GM12878 (cell line): ENCODE measurements at regions of chr6 and their contacts with region 1.

Region 1: DNA sequence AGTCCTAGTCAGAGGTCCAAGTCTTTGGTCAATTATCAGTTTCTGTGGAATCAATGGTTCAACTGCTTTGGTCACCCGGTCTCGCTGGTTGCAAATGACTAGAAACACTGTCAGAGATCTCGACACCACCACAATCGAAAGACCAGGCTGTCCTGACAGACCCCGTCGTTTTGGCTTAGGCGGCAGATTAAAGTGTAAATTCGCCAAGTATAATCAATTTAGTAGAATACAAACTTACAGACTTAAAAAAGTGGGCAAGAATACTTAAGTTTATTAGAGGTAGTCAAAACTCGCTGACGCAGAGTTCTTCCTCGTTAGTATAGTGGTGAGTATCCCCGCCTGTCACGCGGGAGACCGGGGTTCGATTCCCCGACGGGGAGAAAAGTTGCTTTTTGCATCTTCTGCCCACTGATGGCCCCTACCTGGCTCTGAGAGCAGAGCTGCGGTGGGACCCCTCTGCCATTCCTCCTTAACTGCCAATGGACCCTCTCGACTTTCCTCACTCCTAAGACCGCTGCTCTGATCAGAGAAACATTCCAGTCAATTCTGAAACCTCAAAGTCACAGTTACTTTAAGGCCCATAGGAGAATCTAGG is 30.6 kb upstream of the ZNF184 start:
- DNase-seq: peak; percentile 73
- ATAC-seq: peak; percentile 70
- H3K4me3 ChIP-seq: peak overlapping the region; percentile 78
- H3K27ac ChIP-seq: peak overlapping the region; percentile 58
- H3K4me1 ChIP-seq: no peaks in the 10 kb centered on the region
- H3K27me3 ChIP-seq: no peaks in the 10 kb centered on the region; a peak in 1 of 4 replicates
- CTCF ChIP-seq: no peak
- EP300 ChIP-seq: no peak
- POLR2A ChIP-seq: no peak
- RAD21 ChIP-seq: no peak

Region 2: GRCh38 chr6:27312146-27312949 is 191.2 kb before region 1 on chr6 and contains the start of gene POM121L2:
- CTCF ChIA-PET with region 1: interaction called, 3 read pairs
- POLR2A ChIA-PET with region 1: no interaction called
- RAD21 ChIA-PET with region 1: no interaction called
- SMC1A ChIA-PET with region 1: no interaction called
- in situ Hi-C with region 1: no loop called
- intact Hi-C with region 1: loop called (anchors 5 kb)
- DNase-seq: no peak
- ATAC-seq: peak; percentile 89
- H3K4me3 ChIP-seq: peak within 1 kb of the TSS; percentile 82
- H3K27ac ChIP-seq: no peak within 1 kb of the TSS
- H3K4me1 ChIP-seq: 0 out of 2 replicates have a peak, but pooled peaks cover 5% of the 10 kb centered on the region
- H3K27me3 ChIP-seq: no peaks in the 10 kb centered on the region; a peak in 2 of 4 replicates
- CTCF ChIP-seq: peak; percentile 74 to 85 (median 77)
- EP300 ChIP-seq: no peak
- POLR2A ChIP-seq: peak; percentile 45
- RAD21 ChIP-seq: peak; percentile 81
- polyA plus RNA-seq, gene POM121L2: not detected

Region 3: DNA sequence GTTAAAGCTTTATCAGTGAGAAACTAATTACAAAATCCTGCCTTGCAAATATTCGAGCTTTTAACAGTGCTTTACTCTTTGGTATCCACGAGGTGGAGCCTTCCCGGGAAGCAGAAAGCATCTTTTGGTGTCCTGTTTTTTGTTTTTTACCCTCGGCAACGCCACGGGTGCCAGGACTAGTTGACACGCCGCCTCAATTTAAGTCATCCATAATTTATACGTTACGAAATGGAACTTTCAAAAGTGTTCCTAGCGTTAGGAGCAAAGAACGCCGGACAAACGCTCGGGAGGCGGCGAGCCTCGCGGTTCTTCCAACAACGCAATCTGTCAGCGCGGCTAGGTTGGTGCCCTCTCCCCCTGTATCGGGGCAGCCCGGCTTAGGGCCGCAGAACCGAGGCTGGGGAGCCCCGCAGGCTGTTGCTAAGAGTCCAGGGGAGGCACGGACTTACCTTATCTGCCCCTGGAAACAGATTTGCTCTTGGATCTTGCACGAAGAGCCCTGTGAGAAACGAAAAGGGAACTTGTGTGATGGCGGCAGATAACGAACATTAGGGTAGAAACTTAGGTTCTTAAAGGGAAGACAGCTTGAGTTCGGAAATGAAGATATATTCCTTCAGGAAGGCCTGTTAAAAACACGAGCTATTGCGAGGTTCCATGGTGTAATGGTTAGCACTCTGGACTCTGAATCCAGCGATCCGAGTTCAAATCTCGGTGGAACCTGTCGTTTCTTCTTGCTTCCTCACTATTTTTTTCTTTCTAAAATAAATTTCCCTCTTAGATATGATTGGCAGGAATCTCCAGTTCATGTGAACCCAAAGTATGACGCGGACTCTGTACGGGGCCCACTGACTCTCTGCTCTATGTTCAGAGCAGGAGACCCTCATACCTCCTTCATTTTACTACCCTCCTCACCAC is 15.6 kb after region 1 on chr6:
- CTCF ChIA-PET with region 1: interaction called, 14 read pairs
- POLR2A ChIA-PET with region 1: no interaction called
- RAD21 ChIA-PET with region 1: interaction called, 10 read pairs
- SMC1A ChIA-PET with region 1: interaction called, 22 read pairs
- in situ Hi-C with region 1: no loop called
- intact Hi-C with region 1: no loop called
- DNase-seq: peak; percentile 83
- ATAC-seq: peak; percentile 92
- H3K4me3 ChIP-seq: peak overlapping the region; percentile 83
- H3K27ac ChIP-seq: peak overlapping the region; percentile 67
- H3K4me1 ChIP-seq: no peaks in the 10 kb centered on the region
- H3K27me3 ChIP-seq: 0 out of 4 replicates have a peak, but pooled peaks cover 0 to 5% of the 10 kb centered on the region in 2 experiments
- CTCF ChIP-seq: peak; percentile 61 to 72 (median 69)
- EP300 ChIP-seq: peak in 1 of 2 experiments; percentile 15; a peak in 1 of 4 replicates
- POLR2A ChIP-seq: no peak
- RAD21 ChIP-seq: peak; percentile 68

Region 4: DNA sequence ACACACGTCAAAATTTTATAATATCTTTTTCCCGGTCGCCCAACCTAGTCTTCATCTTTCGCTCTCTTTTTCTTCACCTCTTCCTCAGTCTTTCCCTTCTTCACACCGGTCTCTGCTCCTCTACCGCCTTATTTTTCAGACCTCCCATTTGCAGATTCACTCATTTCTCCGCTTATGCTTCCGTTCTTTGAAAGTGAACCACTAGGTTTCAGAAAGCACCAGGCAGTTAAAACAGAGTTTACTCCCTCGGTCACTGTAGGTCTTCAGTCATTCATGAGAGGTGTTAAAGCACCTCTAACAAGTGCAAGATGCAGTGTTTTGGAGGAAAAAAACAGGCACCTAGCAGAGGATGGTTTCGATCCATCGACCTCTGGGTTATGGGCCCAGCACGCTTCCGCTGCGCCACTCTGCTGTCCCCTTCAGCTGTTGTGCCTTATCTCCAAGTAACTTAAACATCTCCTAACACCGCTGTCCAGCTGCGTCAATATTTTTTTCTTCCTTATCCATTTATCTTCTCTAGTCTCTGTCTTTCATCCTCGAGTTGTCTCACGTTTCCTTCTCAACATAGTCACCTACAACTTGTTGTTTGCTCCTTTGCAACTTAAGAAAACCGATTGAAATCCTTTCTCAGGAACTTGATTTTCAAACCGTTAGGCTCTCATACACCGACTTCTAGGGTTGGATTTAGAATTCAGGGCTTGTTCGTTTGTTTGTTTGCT is 89.1 kb after region 1 on chr6:
- CTCF ChIA-PET with region 1: no interaction called
- POLR2A ChIA-PET with region 1: no interaction called
- RAD21 ChIA-PET with region 1: no interaction called
- SMC1A ChIA-PET with region 1: no interaction called
- in situ Hi-C with region 1: no loop called
- intact Hi-C with region 1: loop called (anchors 5 kb)
- DNase-seq: peak; percentile 89
- ATAC-seq: peak; percentile 94
- H3K4me3 ChIP-seq: peak overlapping the region; percentile 81
- H3K27ac ChIP-seq: peak overlapping the region; percentile 9; the same call in 1 of the 2 replicates
- H3K4me1 ChIP-seq: peaks cover 11% of the 10 kb centered on the region
- H3K27me3 ChIP-seq: no peaks in the 10 kb centered on the region
- CTCF ChIP-seq: no peak
- EP300 ChIP-seq: peak in 1 of 2 experiments; percentile 84; a peak in 1 of 4 replicates
- POLR2A ChIP-seq: no peak
- RAD21 ChIP-seq: no peak

Region 5: DNA sequence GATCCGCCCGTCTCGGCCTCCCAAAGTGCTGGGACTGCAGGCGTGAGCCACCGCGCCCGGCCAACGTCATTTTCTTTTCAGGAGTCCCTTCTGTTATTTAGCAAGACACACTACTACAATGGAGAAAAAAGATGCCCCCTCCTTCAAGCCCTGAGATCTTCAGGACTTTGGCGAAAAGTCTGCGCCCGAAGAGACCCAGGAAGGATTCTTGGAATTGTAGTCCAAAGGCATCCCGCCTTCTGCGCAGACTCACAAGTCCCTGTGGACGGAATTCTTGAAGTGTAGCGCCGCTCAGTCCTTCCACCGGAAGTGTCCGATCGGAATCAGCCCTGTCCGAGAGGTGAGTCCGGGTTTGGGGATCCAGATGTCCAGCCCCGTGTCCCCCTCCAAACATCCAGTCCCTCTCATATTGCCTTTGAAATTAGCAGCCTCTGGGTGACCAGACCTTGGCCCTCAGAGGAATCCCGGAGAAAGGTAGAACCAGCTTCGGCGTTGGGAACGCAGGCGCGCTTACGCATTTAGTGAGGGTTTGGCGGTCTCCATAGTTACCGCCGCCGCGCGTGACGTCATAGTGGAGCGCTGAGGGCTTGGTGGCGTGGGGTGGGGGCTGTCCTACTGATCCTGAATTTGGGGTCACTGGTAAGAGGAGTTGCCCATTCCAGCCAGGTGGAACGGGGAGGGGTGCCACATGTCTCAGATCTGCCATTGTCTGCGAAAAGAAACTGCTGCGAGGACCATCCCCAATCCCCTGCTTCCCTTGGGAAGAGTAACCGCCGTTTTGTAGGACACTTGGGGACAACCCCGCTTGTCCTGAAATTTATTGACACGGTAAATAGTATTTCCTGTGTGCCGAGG is 577.3 kb after region 1 on chr6:
- CTCF ChIA-PET with region 1: no interaction called
- POLR2A ChIA-PET with region 1: no interaction called
- RAD21 ChIA-PET with region 1: no interaction called
- SMC1A ChIA-PET with region 1: no interaction called
- in situ Hi-C with region 1: no loop called
- intact Hi-C with region 1: no loop called
- DNase-seq: peak; percentile 91
- ATAC-seq: peak; percentile 81
- H3K4me3 ChIP-seq: peak overlapping the region; percentile 79
- H3K27ac ChIP-seq: peak overlapping the region; percentile 94
- H3K4me1 ChIP-seq: peaks cover 6% of the 10 kb centered on the region
- H3K27me3 ChIP-seq: no peaks in the 10 kb centered on the region
- CTCF ChIP-seq: no peak
- EP300 ChIP-seq: peak in 1 of 2 experiments; percentile 6; a peak in 1 of 4 replicates
- POLR2A ChIP-seq: no peak
- RAD21 ChIP-seq: no peak